ENCODE measurements at regions of chr13 and their contacts with region 1.

Region 1: GRCh38 chr13:46796515-46797474 is at the start of gene ESD:
- DNase-seq: peak; percentile 83
- H3K4me3 Mint-ChIP-seq: peak within 1 kb of the TSS; percentile 93
- H3K27ac Mint-ChIP-seq: peak within 1 kb of the TSS; percentile 95
- H3K4me1 Mint-ChIP-seq: peaks cover 36% of the 10 kb centered on the region
- H3K27me3 Mint-ChIP-seq: peaks cover 7% of the 10 kb centered on the region
- total RNA-seq, gene ESD: 96.8 and 102 TPM in 2 replicates

Region 2: GRCh38 chr13:46052319-46053161 is 744.3 kb before region 1 on chr13 and contains the start of gene ZC3H13:
- intact Hi-C with region 1: loop called (anchors 1 kb)
- DNase-seq: peak; percentile 89
- H3K4me3 Mint-ChIP-seq: peak within 1 kb of the TSS; percentile 93
- H3K27ac Mint-ChIP-seq: peak within 1 kb of the TSS; percentile 94
- H3K4me1 Mint-ChIP-seq: peaks cover 40% of the 10 kb centered on the region
- H3K27me3 Mint-ChIP-seq: peaks cover 15% of the 10 kb centered on the region
- total RNA-seq, gene ZC3H13: 52.0 and 59.4 TPM in 2 replicates

Region 3: DNA sequence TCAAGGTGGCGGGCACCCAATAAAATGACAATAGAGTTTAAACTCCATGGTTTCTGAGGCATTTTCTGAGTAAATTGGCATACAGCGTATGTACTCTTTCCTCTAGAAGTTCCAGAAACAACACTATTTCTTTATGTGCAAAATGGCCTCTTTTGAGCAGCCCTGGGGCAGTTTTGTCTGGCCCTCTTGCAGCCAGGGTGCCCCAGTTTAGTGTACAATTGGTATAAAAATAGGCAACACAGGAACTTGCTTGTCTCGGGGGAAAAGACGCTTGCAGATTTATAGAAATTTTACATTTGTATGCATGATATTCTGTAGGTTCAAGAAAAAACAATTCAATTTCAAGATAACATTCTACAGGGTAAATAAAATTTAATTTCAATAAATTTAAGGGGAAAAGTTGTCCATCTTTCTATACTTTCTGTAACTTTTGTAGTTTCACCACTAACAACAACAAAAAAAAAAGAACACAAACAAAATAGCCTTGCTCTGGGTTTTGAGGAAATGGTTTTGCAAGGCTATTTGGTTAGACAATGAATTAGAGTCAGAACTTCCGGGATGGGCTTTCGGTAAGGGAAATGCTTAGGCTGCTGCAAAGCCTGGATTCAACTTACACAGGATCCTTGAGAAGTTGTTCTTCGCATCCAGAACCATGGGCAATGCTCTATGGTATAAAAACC is 198.5 kb before region 1 on chr13:
- intact Hi-C with region 1: loop called (anchors 5 kb)
- DNase-seq: no peak
- H3K4me3 Mint-ChIP-seq: no peak overlapping the region
- H3K27ac Mint-ChIP-seq: no peak overlapping the region
- H3K4me1 Mint-ChIP-seq: peaks cover 86% of the 10 kb centered on the region
- H3K27me3 Mint-ChIP-seq: no peaks in the 10 kb centered on the region

Region 4: DNA sequence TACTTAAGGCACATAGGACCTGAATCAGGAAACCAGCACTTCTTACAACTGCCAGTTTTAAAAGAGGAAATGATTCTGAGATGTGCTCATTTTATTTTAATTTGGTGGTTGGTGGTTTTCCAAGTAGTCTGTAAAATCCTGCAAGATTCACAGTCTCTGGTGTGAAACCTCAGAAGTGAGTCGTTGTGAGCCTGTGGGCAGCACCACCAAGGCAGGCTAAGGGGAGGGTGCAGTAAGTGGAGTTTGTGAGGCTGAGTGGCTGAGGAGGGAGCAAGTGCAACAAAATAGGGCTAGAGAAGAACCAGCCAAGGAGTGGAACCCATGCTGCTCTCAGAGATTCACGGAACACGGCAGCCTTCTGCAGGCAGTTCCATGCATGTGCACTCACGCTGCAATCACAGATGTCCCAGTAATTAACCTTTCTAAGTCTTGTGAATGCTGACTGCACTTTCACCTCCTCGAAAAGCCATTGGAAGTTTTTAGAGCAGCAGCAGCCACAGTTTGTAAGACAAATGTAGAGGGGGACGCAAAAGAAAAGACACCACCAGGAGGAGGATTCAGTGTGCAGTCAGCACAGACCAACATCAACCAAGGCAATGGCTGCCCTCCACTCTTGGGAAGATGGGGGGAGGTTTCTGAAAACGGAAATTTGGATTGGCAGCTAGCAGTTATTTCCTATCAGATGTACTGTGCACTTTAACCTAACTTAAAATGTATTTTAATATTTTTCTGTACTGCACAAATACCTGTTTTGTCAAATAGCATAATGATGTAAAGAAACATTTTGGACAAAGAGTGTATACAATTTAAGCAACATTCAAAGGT is 44.8 kb before region 1 on chr13:
- intact Hi-C with region 1: loop called (anchors 1 kb)
- DNase-seq: peak; percentile 66
- H3K4me3 Mint-ChIP-seq: peak overlapping the region; percentile 5
- H3K27ac Mint-ChIP-seq: peak overlapping the region; percentile 69
- H3K4me1 Mint-ChIP-seq: peaks cover 47% of the 10 kb centered on the region
- H3K27me3 Mint-ChIP-seq: no peaks in the 10 kb centered on the region

Region 5: GRCh38 chr13:46893798-46894560 is 97.2 kb after region 1 on chr13:
- intact Hi-C with region 1: loop called (anchors 1 kb)
- DNase-seq: peak; percentile 49
- H3K4me3 Mint-ChIP-seq: peak overlapping the region; percentile 76
- H3K27ac Mint-ChIP-seq: no peak overlapping the region
- H3K4me1 Mint-ChIP-seq: peaks cover 7% of the 10 kb centered on the region
- H3K27me3 Mint-ChIP-seq: peaks cover 65% of the 10 kb centered on the region

Measured in activated T-helper 1 cell treated with anti-CD3 and anti-CD28 coated beads, Interleukin-12 subunit alpha, Interleukin-12 subunit beta, Interleukin-2, Interleukin-4 antibody, amounts not matched to agents 30 ng/mL and 10 ng/mL and 1 ng/mL, durations not matched to agents 14 hours and 24 hours and 36 hours (primary cell).